GM12878 (cell line): ENCODE measurements at regions of chr3 and their contacts with region 1.

Region 1: GRCh38 chr3:111668912-111669488 is 73.9 kb upstream of the ZBED2 start:
- DNase-seq: no peak
- ATAC-seq: peak; percentile 88
- H3K4me3 ChIP-seq: no peak overlapping the region
- H3K27ac ChIP-seq: no peak overlapping the region
- H3K4me1 ChIP-seq: peaks cover 8% of the 10 kb centered on the region; the same call in 1 of the 2 replicates
- H3K27me3 ChIP-seq: no peaks in the 10 kb centered on the region
- CTCF ChIP-seq: peak; percentile 69 to 79 (median 76)
- EP300 ChIP-seq: no peak
- POLR2A ChIP-seq: no peak
- RAD21 ChIP-seq: peak; percentile 84

Region 2: DNA sequence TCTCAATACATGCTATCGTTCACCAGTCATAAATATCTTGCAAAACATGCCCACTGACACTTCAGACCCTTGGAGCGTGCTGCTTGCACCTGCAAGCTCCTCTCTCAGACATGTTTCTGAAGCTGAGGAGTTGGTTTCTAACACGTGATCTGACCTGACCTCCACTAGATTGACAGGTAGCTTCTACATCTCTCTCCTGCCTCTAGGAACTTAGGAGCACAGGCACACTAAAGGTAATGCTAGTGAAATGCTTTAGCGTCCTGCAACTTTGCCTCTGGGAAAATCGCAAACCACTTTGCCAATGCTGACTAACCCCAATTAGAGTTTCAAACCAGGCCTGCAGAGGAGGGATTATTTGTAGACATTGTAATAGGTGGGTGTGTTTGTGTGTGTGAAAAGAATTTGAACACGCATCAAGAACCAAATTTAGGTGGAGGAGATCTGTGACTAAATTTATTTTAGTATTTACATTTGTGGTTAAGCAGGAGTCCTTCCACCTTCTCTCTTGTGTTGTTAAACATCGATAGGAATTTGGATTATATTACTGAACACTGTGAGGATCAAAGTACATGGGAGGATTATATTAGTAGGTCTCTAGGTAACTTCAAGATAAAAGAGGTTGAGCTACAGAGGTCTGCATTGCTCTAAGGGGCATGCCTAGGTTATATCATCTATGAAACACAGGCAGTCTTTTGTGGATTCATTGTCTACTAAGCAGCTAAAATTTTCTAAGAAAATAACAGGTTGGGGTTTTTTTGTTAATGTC is 12.8 kb after region 1 on chr3:
- CTCF ChIA-PET with region 1: interaction called, 6 read pairs
- POLR2A ChIA-PET with region 1: interaction called, 3 read pairs
- RAD21 ChIA-PET with region 1: interaction called, 12 read pairs
- SMC1A ChIA-PET with region 1: interaction called, 13 read pairs
- in situ Hi-C with region 1: no loop called
- intact Hi-C with region 1: no loop called
- DNase-seq: no peak
- ATAC-seq: peak; percentile 9; the same call in 2 of the 3 replicates
- H3K4me3 ChIP-seq: no peak overlapping the region
- H3K27ac ChIP-seq: no peak overlapping the region
- H3K4me1 ChIP-seq: peaks cover 19% of the 10 kb centered on the region
- H3K27me3 ChIP-seq: no peaks in the 10 kb centered on the region
- CTCF ChIP-seq: no peak
- EP300 ChIP-seq: no peak
- POLR2A ChIP-seq: no peak
- RAD21 ChIP-seq: no peak

Region 3: DNA sequence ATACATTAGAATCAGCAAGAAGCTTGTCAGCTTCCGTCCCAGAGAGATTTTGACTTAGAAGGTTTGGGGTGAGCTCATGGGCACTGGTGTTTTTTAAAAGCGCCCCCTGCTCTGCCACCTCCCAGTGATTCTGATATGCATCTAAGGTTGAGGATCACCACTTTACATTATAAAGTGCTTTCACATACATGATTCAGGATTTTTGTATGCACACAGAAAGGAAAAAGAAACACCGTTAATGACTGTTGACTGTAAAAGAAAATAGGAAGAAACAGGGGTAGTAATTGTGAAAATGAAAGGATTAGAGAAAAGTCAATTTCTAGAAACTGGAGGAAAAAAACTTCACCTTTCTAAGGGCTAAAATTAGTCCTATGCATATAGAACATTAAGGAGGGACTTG is 31.1 kb after region 1 on chr3:
- CTCF ChIA-PET with region 1: interaction called, 9 read pairs
- POLR2A ChIA-PET with region 1: interaction called, 3 read pairs
- RAD21 ChIA-PET with region 1: interaction called, 6 read pairs
- SMC1A ChIA-PET with region 1: interaction called, 19 read pairs
- in situ Hi-C with region 1: no loop called
- intact Hi-C with region 1: loop called (anchors 5 kb)
- DNase-seq: no peak
- ATAC-seq: peak; percentile 61
- H3K4me3 ChIP-seq: no peak overlapping the region
- H3K27ac ChIP-seq: no peak overlapping the region
- H3K4me1 ChIP-seq: peaks cover 11% of the 10 kb centered on the region; the same call in 1 of the 2 replicates
- H3K27me3 ChIP-seq: no peaks in the 10 kb centered on the region
- CTCF ChIP-seq: no peak
- EP300 ChIP-seq: no peak
- POLR2A ChIP-seq: no peak
- RAD21 ChIP-seq: no peak

Region 4: GRCh38 chr3:111723293-111724215 is 54.6 kb after region 1 on chr3:
- CTCF ChIA-PET with region 1: interaction called, 19 read pairs
- POLR2A ChIA-PET with region 1: interaction called, 3 read pairs
- RAD21 ChIA-PET with region 1: interaction called, 8 read pairs
- SMC1A ChIA-PET with region 1: no interaction called
- in situ Hi-C with region 1: no loop called
- intact Hi-C with region 1: no loop called
- DNase-seq: no peak
- ATAC-seq: peak; percentile 48; the same call in 2 of the 3 replicates
- H3K4me3 ChIP-seq: no peak overlapping the region
- H3K27ac ChIP-seq: no peak overlapping the region
- H3K4me1 ChIP-seq: peaks cover 8% of the 10 kb centered on the region
- H3K27me3 ChIP-seq: no peaks in the 10 kb centered on the region
- CTCF ChIP-seq: no peak
- EP300 ChIP-seq: no peak
- POLR2A ChIP-seq: no peak
- RAD21 ChIP-seq: no peak

Region 5: GRCh38 chr3:111978493-111979433 is 309.8 kb after region 1 on chr3 and contains the start of gene ABHD10:
- CTCF ChIA-PET with region 1: interaction called, 15 read pairs
- POLR2A ChIA-PET with region 1: no interaction called
- RAD21 ChIA-PET with region 1: interaction called, 9 read pairs
- SMC1A ChIA-PET with region 1: interaction called, 5 read pairs
- in situ Hi-C with region 1: loop called (anchors 5 kb)
- intact Hi-C with region 1: no loop called
- DNase-seq: peak; percentile 92
- ATAC-seq: peak; percentile 97
- H3K4me3 ChIP-seq: peak within 1 kb of the TSS; percentile 89
- H3K27ac ChIP-seq: peak within 1 kb of the TSS; percentile 78
- H3K4me1 ChIP-seq: peaks cover 5% of the 10 kb centered on the region
- H3K27me3 ChIP-seq: no peaks in the 10 kb centered on the region
- CTCF ChIP-seq: no peak
- EP300 ChIP-seq: no peak
- POLR2A ChIP-seq: peak; percentile 99
- RAD21 ChIP-seq: no peak
- polyA plus RNA-seq, gene ABHD10: 12.3 to 16.7 TPM